Motor neuron (in vitro differentiated cells): ENCODE measurements at regions of chr1 and their contacts with region 1.

Region 1: DNA sequence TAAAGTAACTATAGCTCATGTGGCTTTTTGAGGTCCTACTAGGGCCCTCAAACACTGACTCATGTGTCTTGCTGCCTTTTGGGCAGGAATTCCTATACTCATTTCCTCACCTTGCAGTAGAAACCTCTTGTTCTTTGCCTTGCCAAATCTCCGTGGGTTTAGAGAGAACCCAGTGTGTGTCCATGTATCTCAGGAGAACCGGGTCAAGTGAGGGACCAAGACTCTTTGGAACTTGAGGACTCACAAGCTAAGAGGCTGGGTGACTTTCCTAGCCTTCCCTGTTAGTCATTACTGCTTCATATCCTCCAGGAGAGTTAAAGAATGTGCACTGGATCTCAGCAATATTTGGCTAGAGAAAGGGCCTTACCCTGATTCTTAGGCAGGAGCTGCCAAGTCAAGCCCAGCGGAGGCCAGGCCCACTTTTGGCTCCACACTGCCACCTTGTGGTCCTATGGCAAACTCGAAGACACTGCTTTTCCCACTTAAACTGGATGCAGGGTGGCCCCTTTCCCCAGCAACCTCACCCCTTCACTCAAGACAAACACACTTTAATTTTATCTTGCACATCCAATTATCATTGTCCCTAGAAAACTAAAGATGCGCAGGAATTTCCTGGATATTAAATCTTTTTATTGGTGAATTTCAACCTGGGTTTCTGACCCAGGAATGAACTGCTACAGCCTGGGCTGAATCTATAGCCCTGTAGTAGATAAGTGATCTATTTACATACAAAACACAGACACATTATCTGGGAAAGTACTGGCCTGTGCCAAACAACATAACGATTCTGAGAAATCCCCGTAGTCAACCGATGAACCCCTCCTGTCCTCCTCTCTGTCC is 10.6 kb downstream of the AVPR1B start:
- ATAC-seq: peak; percentile 79 to 99 (median 85)
- H3K4me3 ChIP-seq: no peak overlapping the region
- H3K27ac ChIP-seq: no peak overlapping the region
- H3K4me1 ChIP-seq: peaks cover 0 to 3% of the 10 kb centered on the region in 2 donors

Region 2: DNA sequence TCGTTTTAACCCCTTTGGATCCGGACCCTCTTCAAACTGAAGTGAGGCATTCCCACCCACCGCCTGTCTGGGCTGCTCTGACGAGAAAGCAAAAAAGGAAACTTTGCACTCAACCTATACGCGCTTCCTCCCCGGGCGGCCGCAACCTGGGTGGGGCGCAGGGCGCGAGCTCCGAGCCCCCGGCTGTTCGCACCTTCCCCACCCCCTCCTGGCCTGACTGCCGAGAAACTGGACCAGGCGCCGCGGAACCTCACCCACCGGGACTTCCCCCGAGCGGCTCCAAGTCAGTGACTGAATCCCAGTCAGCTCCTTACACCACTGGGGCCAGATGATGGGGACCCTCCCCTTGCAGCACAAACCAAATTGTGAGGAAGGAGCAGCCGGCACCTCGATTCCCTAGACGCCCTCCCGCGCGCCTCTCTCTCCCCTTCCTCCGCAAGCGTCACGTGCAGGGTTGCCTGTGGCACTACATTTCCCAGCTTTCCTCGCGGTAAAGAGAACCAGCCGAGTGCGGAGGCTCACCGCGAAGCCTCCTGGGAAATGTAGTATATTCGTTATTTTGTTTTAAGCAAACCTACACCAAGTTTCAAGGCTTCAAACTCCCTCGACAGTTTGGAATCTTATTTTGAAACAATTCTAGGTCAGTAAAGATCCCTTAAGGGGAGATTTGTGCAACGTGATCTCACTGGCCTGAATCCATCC is 331.4 kb before region 1 on chr1 and contains the start of gene RAB29:
- in situ Hi-C with region 1: loop called in 1 of 9 experiments (anchors 25 kb)
- ATAC-seq: peak; percentile 88 to 99 (median 98)
- H3K4me3 ChIP-seq: peak within 1 kb of the TSS; percentile 57 to 63 (median 58)
- H3K27ac ChIP-seq: no peak within 1 kb of the TSS
- H3K4me1 ChIP-seq: peaks cover 0 to 4% of the 10 kb centered on the region in 2 donors
- total RNA-seq, gene RAB29: 1.6 to 26.2 (median 6.6) TPM

Region 3: DNA sequence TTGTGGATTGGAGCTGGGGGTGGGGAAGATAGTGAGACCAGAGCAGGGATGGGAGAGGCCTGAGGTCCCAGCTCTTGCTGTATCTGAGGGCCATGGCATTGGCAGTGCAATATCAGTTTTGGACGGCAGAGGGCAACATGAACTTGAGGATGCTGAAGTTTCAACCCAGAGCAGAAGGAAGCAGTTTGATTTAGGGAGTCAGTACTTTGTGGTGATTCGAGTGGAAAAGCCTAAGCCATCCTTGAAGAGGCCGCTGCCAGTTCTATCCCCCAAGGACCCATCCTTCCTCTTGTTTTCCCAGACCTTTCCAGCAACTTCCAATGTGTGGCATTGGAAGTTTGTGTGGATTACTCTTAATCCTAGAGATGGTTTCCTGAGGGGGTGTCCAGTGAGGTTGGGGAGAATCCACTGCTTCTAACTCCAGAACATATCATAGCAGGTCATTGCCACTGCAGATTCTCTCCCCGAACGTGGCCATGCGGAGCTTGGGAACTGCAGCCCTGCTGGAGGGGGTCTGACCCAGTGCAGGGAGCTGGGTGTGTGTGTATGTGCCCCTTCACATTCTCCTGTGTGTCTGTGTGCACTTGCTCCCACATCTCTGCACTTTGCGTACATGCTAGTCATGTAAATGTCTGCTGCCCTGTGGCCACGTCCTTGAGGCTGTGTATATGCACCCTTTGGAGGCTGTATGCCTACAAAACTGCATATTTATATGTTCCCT is 187.4 kb before region 1 on chr1:
- in situ Hi-C with region 1: loop called in 1 of 9 experiments (anchors 25 kb)
- ATAC-seq: peak; percentile 94 to 98 (median 96)
- H3K4me3 ChIP-seq: no peak overlapping the region
- H3K27ac ChIP-seq: no peak overlapping the region
- H3K4me1 ChIP-seq: peaks cover 0 to 4% of the 10 kb centered on the region in 2 donors

Region 4: DNA sequence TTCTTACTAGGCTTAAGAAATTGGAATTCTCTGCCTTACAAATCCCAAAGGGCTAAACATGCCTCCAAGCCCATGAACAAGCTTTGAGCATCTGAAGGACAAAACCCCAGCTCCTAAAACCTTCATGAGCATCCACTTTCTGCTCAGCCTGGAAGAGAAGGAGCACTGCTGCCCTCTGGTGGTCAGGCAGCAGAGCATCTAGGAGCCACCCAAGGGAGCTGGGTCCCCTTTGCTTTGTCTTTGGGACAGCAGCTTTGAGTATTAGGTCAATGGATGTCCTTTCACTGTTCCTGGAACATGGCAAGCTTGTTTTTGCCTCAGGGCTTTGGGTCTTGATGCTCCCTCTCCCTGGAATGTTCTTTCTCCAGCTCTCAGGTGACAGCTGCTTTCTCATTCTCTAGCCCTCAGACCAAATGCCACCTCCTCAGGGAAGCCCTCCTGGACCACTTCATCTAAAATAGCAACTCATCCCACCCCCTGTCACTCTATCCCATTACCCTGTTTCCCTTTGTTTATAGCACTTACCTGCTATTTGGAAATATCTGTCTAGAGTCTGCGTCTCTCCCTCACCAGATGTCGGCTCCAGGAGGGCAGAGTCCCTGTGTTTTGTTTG is 129.0 kb before region 1 on chr1:
- in situ Hi-C with region 1: loop called in 3 of 9 experiments (anchors 5 to 25 kb)
- ATAC-seq: peak; percentile 54 to 89 (median 66)
- H3K4me3 ChIP-seq: no peak overlapping the region
- H3K27ac ChIP-seq: no peak overlapping the region
- H3K4me1 ChIP-seq: peaks cover 19 to 20% of the 10 kb centered on the region in 2 donors

Region 5: DNA sequence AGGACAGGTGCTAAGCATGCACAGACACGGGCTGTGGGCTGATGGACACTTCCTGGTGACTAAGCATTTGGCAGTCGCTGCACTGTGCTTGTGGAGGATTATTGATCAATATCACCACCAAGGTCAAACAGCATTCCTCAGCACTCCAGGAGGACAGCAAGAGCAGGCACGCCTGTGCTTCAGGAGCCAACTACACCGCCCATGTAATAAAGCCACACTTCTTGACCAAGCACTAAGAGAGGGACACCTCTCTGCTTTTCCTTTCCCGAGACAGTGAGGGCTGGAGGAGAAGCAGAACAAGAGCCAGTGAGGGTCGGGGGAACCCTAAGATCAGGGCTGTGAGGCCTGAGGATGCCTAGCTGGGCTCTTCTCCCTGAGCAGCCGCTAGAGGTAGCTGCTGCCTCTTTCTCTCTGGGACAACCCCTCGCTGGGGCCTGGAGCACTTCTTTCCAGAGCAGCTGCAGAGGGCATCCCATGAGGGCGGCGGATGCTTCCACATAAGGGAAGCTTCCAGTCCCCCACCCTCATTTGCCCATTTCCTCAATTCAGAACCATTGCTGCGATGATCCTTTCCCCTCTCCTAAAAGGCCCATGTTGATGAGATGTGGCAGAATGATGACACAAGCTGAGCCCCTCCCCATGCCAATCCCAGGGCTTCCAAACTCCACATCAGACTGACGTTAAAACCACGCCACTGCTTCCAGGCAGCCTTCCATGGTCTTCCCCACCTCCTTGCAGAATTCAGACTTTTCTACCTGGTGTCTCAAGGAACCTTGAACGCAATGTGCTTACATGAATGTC is 122.4 kb before region 1 on chr1:
- in situ Hi-C with region 1: loop called in 3 of 9 experiments (anchors 5 to 25 kb)
- ATAC-seq: peak; percentile 83 to 99 (median 91)
- H3K4me3 ChIP-seq: no peak overlapping the region
- H3K27ac ChIP-seq: peak overlapping the region in 1 of 2 donors; percentile 35
- H3K4me1 ChIP-seq: peaks cover 11 to 16% of the 10 kb centered on the region in 2 donors

Region 6: GRCh38 chr1:206029484-206029883 is 77.1 kb before region 1 on chr1:
- in situ Hi-C with region 1: loop called in 2 of 9 experiments (anchors 10 kb)
- ATAC-seq: no peak
- H3K4me3 ChIP-seq: no peak overlapping the region
- H3K27ac ChIP-seq: no peak overlapping the region
- H3K4me1 ChIP-seq: no peaks in the 10 kb centered on the region